Activated naive CD4-positive, alpha-beta T cell treated with anti-CD3 and anti-CD28 coated beads for 36 hours (primary cell): ENCODE measurements at regions of chr15 and their contacts with region 1.

Region 1: DNA sequence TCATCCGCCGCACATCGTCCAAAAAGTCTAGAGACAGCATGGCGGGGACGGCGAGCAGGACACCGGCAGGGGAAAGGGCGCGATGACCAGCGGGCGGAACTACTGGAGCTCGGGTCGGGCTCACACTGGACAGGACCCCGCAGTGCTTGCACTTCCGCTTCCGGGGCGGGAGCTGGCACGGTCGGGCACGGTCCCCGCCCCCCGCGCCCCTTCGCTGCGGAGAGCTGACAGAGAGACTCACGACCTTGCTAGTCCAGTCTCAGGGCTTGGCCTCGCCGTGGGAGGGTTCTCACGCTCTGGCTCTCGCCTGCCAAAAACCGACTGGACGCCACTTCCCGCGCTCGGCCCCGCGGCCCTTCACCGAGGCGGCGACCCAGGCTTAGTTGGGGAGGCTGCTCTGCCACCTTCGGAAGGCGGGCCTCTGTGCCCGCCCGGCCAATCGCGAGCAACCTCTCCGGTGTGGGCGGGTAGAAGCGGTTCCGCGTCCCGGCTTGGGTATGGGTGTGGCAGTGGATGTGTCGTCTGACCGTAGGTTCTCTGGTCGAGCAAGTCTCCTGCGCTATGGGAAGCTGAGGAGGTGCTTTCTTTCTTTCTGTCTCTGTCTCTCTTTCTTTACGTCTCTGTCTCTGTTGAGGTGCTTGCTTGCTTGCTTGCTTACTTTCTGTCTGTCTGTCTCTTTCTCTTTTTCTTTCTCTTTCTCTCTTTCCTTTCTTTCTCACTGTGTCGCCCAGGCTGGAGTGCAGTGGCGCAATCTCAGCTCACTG is at the start of gene SEC11A:
- DNase-seq: peak; percentile 93
- H3K4me3 Mint-ChIP-seq: peak within 1 kb of the TSS; percentile 93
- H3K27ac Mint-ChIP-seq: peak within 1 kb of the TSS; percentile 93
- H3K4me1 Mint-ChIP-seq: peaks cover 51% of the 10 kb centered on the region
- H3K27me3 Mint-ChIP-seq: no peaks in the 10 kb centered on the region
- total RNA-seq, gene SEC11A: 87.2 to 99.1 TPM

Region 2: GRCh38 chr15:84633311-84634227 is 82.6 kb before region 1 on chr15:
- CTCF ChIA-PET with region 1: interaction called, 4 read pairs
- intact Hi-C with region 1: loop called (anchors 1 kb)
- DNase-seq: peak; percentile 63
- H3K4me3 Mint-ChIP-seq: peak overlapping the region; percentile 94
- H3K27ac Mint-ChIP-seq: peak overlapping the region; percentile 93
- H3K4me1 Mint-ChIP-seq: peaks cover 46% of the 10 kb centered on the region
- H3K27me3 Mint-ChIP-seq: no peaks in the 10 kb centered on the region

Region 3: DNA sequence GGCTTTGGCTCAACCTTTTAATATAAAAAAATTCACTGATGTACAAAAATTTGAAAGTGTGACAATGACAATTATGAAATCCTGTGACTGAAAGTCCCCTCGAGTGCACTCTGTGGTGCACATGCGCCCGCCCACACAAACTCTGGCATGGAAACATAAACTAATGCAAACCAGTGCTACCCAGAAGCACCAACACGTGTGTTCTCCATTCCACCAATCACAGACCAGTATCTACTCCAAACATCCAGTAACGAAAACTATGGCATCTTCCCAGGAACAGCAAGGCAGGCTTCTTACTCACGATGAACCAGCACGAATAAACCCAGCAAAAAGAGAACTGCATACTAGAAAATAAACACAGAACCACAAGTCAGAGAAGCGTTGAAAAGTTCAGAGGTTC is 46.5 kb before region 1 on chr15:
- CTCF ChIA-PET with region 1: no interaction called
- intact Hi-C with region 1: loop called (anchors 1 kb)
- DNase-seq: peak; percentile 59
- H3K4me3 Mint-ChIP-seq: no peak overlapping the region
- H3K27ac Mint-ChIP-seq: no peak overlapping the region
- H3K4me1 Mint-ChIP-seq: peaks cover 35% of the 10 kb centered on the region
- H3K27me3 Mint-ChIP-seq: no peaks in the 10 kb centered on the region

Region 4: DNA sequence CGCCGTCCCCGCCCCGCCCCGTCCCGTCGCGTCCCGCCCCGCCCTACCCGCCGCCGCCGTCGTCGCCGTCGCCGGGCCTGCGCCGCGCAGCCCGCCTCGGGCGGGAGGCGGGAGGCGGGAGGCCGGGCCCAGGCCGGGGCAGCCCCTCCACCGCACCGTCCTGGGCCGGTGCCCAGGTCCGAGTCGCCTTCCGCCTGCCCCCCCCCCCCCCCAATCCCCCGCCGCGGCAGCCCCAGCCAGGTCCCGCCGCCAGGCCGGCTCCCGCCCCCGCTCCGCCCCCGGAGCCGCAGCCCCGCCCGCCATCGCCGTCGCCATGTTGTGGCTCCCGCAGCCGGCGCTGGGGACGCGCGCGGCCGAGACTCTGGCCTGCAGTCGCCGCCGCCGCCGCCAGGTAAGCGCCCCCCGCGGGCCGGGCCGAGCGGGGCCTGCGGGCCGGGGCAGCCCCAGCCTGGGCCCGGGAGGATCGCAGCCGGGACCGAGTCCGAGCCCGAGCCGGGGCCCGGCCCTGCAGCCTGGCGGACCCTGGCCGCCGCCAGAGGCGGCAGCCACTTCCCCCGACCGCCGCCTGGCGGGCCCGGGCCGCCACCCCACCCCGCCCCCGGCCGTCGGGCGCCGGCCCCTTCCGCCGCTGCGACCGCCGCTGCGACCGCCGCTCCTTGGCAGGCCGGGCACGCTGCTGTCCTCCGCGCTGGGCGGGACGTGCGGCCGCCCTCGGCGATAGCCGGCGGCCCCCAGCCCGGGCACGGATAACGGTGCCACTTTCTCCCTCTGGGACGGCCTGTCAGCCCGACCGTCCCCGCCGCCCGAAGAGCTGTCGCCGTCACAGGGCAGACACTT is 32.3 kb after region 1 on chr15 and contains the start of gene ZNF592:
- CTCF ChIA-PET with region 1: interaction called, 3 read pairs
- intact Hi-C with region 1: loop called (anchors 1 kb)
- DNase-seq: peak; percentile 79
- H3K4me3 Mint-ChIP-seq: peak within 1 kb of the TSS; percentile 97
- H3K27ac Mint-ChIP-seq: peak within 1 kb of the TSS; percentile 98
- H3K4me1 Mint-ChIP-seq: peaks cover 54% of the 10 kb centered on the region
- H3K27me3 Mint-ChIP-seq: no peaks in the 10 kb centered on the region
- total RNA-seq, gene ZNF592: 24.2 to 24.3 TPM

Region 5: GRCh38 chr15:84761607-84762131 is 45.5 kb after region 1 on chr15:
- CTCF ChIA-PET with region 1: interaction called, 3 read pairs
- intact Hi-C with region 1: loop called (anchors 1 kb)
- DNase-seq: peak; percentile 20
- H3K4me3 Mint-ChIP-seq: no peak overlapping the region
- H3K27ac Mint-ChIP-seq: no peak overlapping the region
- H3K4me1 Mint-ChIP-seq: peaks cover 28% of the 10 kb centered on the region
- H3K27me3 Mint-ChIP-seq: no peaks in the 10 kb centered on the region

Region 6: GRCh38 chr15:84955089-84955848 is 239.1 kb after region 1 on chr15:
- CTCF ChIA-PET with region 1: no interaction called
- intact Hi-C with region 1: no loop called
- DNase-seq: peak; percentile 69
- H3K4me3 Mint-ChIP-seq: no peak overlapping the region
- H3K27ac Mint-ChIP-seq: no peak overlapping the region
- H3K4me1 Mint-ChIP-seq: peaks cover 8% of the 10 kb centered on the region
- H3K27me3 Mint-ChIP-seq: peaks cover 4% of the 10 kb centered on the region